ENCODE measurements at regions of chr3 and their contacts with region 1.

Region 1: GRCh38 chr3:51384726-51385473 is at the start of gene MANF:
- DNase-seq: peak; percentile 99
- H3K4me3 ChIP-seq: peak within 1 kb of the TSS; percentile 77 to 89
- H3K27ac ChIP-seq: peak within 1 kb of the TSS; percentile 92 to 93
- H3K4me1 ChIP-seq: peaks cover 0 to 53% (median 27%) of the 10 kb centered on the region in 4 donors
- H3K27me3 ChIP-seq: no peaks in the 10 kb centered on the region
- CTCF ChIP-seq: peak in 1 of 2 experiments; percentile 50

Region 2: DNA sequence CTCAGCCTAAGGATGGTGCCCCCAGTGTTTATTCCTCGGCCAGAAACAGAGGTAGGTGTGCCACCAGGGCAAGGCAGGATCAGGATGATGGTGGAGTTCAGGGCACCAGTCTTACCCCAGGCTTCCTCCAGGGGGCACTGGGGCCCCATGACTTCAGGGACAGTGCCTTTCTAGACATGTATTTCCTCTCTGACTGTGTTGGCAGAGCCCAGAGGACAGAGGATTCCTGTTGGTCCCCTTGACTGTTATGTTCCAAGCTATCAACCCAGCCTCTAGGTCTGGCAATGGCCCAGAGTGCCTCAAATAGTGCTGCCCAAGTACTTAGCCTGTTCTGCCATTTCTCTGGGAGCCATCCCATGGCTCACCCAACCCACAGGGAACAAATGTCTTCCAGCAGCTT is 812.7 kb before region 1 on chr3:
- intact Hi-C with region 1: loop called (anchors 10 kb)
- DNase-seq: peak; percentile 60 to 80
- H3K4me3 ChIP-seq: no peak overlapping the region
- H3K27ac ChIP-seq: peak overlapping the region in 1 of 2 donors; percentile 29
- H3K4me1 ChIP-seq: peaks cover 0 to 30% (median 19%) of the 10 kb centered on the region in 4 donors
- H3K27me3 ChIP-seq: no peaks in the 10 kb centered on the region
- CTCF ChIP-seq: peak; percentile 94 to 97

Measured in tibial artery (tissue), 4 donors.